ENCODE measurements at regions of chr20 and their contacts with region 1.

Region 1: GRCh38 chr20:24164360-24164759 is 175.8 kb upstream of the GGTLC1 start:
- DNase-seq: peak; percentile 44 to 58
- ATAC-seq: peak in 2 of 3 donors; percentile 58 to 72
- H3K4me3 ChIP-seq: no peak overlapping the region
- H3K4me3 Mint-ChIP-seq: no peak overlapping the region
- H3K27ac ChIP-seq: no peak overlapping the region
- H3K27ac Mint-ChIP-seq: no peak overlapping the region
- H3K4me1 ChIP-seq: peaks cover 9% of the 10 kb centered on the region
- H3K4me1 Mint-ChIP-seq: peaks cover 11 to 26% of the 10 kb centered on the region in 2 donors
- H3K27me3 ChIP-seq: no peaks in the 10 kb centered on the region
- H3K27me3 Mint-ChIP-seq: peaks cover 3 to 7% of the 10 kb centered on the region in 2 donors
- CTCF ChIP-seq: peak; percentile 82

Region 2: GRCh38 chr20:24100385-24101011 is 63.9 kb before region 1 on chr20:
- intact Hi-C with region 1: loop called (anchors 2 kb)
- DNase-seq: peak; percentile 51 to 80
- ATAC-seq: peak; percentile 91 to 97 (median 95)
- H3K4me3 ChIP-seq: no peak overlapping the region
- H3K4me3 Mint-ChIP-seq: no peak overlapping the region
- H3K27ac ChIP-seq: no peak overlapping the region
- H3K27ac Mint-ChIP-seq: peak overlapping the region in 1 of 2 donors; percentile 76
- H3K4me1 ChIP-seq: peaks cover 10% of the 10 kb centered on the region
- H3K4me1 Mint-ChIP-seq: peaks cover 23 to 27% of the 10 kb centered on the region in 2 donors
- H3K27me3 ChIP-seq: no peaks in the 10 kb centered on the region
- H3K27me3 Mint-ChIP-seq: peaks cover 8% of the 10 kb centered on the region in 2 donors
- CTCF ChIP-seq: peak; percentile 70